WTC11 (cell line): ENCODE measurements at regions of chr1 and their contacts with region 1.

Region 1: GRCh38 chr1:242523719-242524570 is 552 bp downstream of the PLD5 start:
- DNase-seq: peak; percentile 84
- ATAC-seq: peak; percentile 68
- H3K4me3 Mint-ChIP-seq: peak overlapping the region; percentile 92
- H3K27ac Mint-ChIP-seq: no peak overlapping the region
- H3K4me1 Mint-ChIP-seq: peaks cover 29% of the 10 kb centered on the region
- H3K27me3 Mint-ChIP-seq: peaks cover 39% of the 10 kb centered on the region
- CTCF ChIP-seq: no peak

Region 2: GRCh38 chr1:242651817-242652216 is 127.9 kb after region 1 on chr1:
- CTCF ChIA-PET with region 1: interaction called, 12 read pairs
- POLR2A ChIA-PET with region 1: no interaction called
- DNase-seq: peak; percentile 80
- ATAC-seq: peak; percentile 97
- H3K4me3 Mint-ChIP-seq: no peak overlapping the region
- H3K27ac Mint-ChIP-seq: no peak overlapping the region
- H3K4me1 Mint-ChIP-seq: peaks cover 12% of the 10 kb centered on the region
- H3K27me3 Mint-ChIP-seq: no peaks in the 10 kb centered on the region; the same call in 1 of the 2 replicates
- CTCF ChIP-seq: peak; percentile 31; the same call in 1 of the 2 replicates